ENCODE measurements at regions of chr11 and their contacts with region 1.

Region 1: GRCh38 chr11:122853971-122854446 is 15.7 kb downstream of the CRTAM start:
- DNase-seq: peak in 5 of 9 experiments; percentile 41 to 85 (median 65)
- ATAC-seq: no peak
- H3K4me3 ChIP-seq: no peak overlapping the region
- H3K4me3 Mint-ChIP-seq: no peak overlapping the region
- H3K27ac ChIP-seq: no peak overlapping the region
- H3K27ac Mint-ChIP-seq: peak overlapping the region; percentile 93
- H3K4me1 ChIP-seq: peaks cover 57% of the 10 kb centered on the region
- H3K4me1 Mint-ChIP-seq: peaks cover 61% of the 10 kb centered on the region
- H3K27me3 ChIP-seq: no peaks in the 10 kb centered on the region
- H3K27me3 Mint-ChIP-seq: no peaks in the 10 kb centered on the region
- CTCF ChIP-seq: peak; percentile 78

Region 2: GRCh38 chr11:122628810-122629555 is 225.0 kb before region 1 on chr11:
- CTCF ChIA-PET with region 1: interaction called, 14 read pairs
- POLR2A ChIA-PET with region 1: no interaction called
- intact Hi-C with region 1: loop called in 1 of 2 experiments (anchors 1 kb)
- DNase-seq: peak; percentile 46 to 81 (median 71)
- ATAC-seq: peak; percentile 93
- H3K4me3 ChIP-seq: no peak overlapping the region
- H3K4me3 Mint-ChIP-seq: no peak overlapping the region
- H3K27ac ChIP-seq: no peak overlapping the region
- H3K27ac Mint-ChIP-seq: no peak overlapping the region
- H3K4me1 ChIP-seq: no peaks in the 10 kb centered on the region
- H3K4me1 Mint-ChIP-seq: peaks cover 20% of the 10 kb centered on the region
- H3K27me3 ChIP-seq: no peaks in the 10 kb centered on the region
- H3K27me3 Mint-ChIP-seq: no peaks in the 10 kb centered on the region
- CTCF ChIP-seq: peak; percentile 75

Region 3: GRCh38 chr11:122727101-122727929 is 126.7 kb before region 1 on chr11:
- CTCF ChIA-PET with region 1: no interaction called
- POLR2A ChIA-PET with region 1: no interaction called
- intact Hi-C with region 1: no loop called
- DNase-seq: peak in 8 of 9 experiments; percentile 6 to 67 (median 39)
- ATAC-seq: peak; percentile 74
- H3K4me3 ChIP-seq: peak overlapping the region; percentile 3 to 28
- H3K4me3 Mint-ChIP-seq: peak overlapping the region; percentile 80
- H3K27ac ChIP-seq: peak overlapping the region; percentile 56 to 74
- H3K27ac Mint-ChIP-seq: peak overlapping the region; percentile 98
- H3K4me1 ChIP-seq: peaks cover 66% of the 10 kb centered on the region
- H3K4me1 Mint-ChIP-seq: peaks cover 80% of the 10 kb centered on the region
- H3K27me3 ChIP-seq: no peaks in the 10 kb centered on the region
- H3K27me3 Mint-ChIP-seq: no peaks in the 10 kb centered on the region
- CTCF ChIP-seq: no peak

Region 4: GRCh38 chr11:122772945-122773344 is 81.1 kb before region 1 on chr11:
- CTCF ChIA-PET with region 1: interaction called, 17 read pairs
- POLR2A ChIA-PET with region 1: no interaction called
- intact Hi-C with region 1: no loop called
- DNase-seq: no peak
- ATAC-seq: no peak
- H3K4me3 ChIP-seq: no peak overlapping the region
- H3K4me3 Mint-ChIP-seq: no peak overlapping the region
- H3K27ac ChIP-seq: no peak overlapping the region
- H3K27ac Mint-ChIP-seq: no peak overlapping the region
- H3K4me1 ChIP-seq: no peaks in the 10 kb centered on the region
- H3K4me1 Mint-ChIP-seq: peaks cover 30% of the 10 kb centered on the region
- H3K27me3 ChIP-seq: no peaks in the 10 kb centered on the region
- H3K27me3 Mint-ChIP-seq: no peaks in the 10 kb centered on the region
- CTCF ChIP-seq: no peak

Region 5: GRCh38 chr11:122808478-122808869 is 45.5 kb before region 1 on chr11:
- CTCF ChIA-PET with region 1: interaction called, 191 read pairs
- POLR2A ChIA-PET with region 1: interaction called, 6 read pairs
- intact Hi-C with region 1: no loop called
- DNase-seq: no peak
- ATAC-seq: no peak
- H3K4me3 ChIP-seq: no peak overlapping the region
- H3K4me3 Mint-ChIP-seq: no peak overlapping the region
- H3K27ac ChIP-seq: peak overlapping the region in 1 of 2 experiments; percentile 47
- H3K27ac Mint-ChIP-seq: peak overlapping the region; percentile 85
- H3K4me1 ChIP-seq: peaks cover 35% of the 10 kb centered on the region
- H3K4me1 Mint-ChIP-seq: peaks cover 61% of the 10 kb centered on the region
- H3K27me3 ChIP-seq: no peaks in the 10 kb centered on the region
- H3K27me3 Mint-ChIP-seq: no peaks in the 10 kb centered on the region
- CTCF ChIP-seq: no peak

Region 6: GRCh38 chr11:122843281-122844141 is 10.5 kb before region 1 on chr11:
- CTCF ChIA-PET with region 1: interaction called, 127 read pairs
- POLR2A ChIA-PET with region 1: interaction called, 69 read pairs
- intact Hi-C with region 1: loop called (anchors 1 kb)
- DNase-seq: peak; percentile 31 to 92 (median 61)
- ATAC-seq: peak; percentile 82
- H3K4me3 ChIP-seq: peak overlapping the region; percentile 14 to 38
- H3K4me3 Mint-ChIP-seq: peak overlapping the region; percentile 59
- H3K27ac ChIP-seq: peak overlapping the region; percentile 56 to 84
- H3K27ac Mint-ChIP-seq: peak overlapping the region; percentile 94
- H3K4me1 ChIP-seq: peaks cover 75% of the 10 kb centered on the region
- H3K4me1 Mint-ChIP-seq: peaks cover 86% of the 10 kb centered on the region
- H3K27me3 ChIP-seq: no peaks in the 10 kb centered on the region
- H3K27me3 Mint-ChIP-seq: no peaks in the 10 kb centered on the region
- CTCF ChIP-seq: no peak

Region 7: DNA sequence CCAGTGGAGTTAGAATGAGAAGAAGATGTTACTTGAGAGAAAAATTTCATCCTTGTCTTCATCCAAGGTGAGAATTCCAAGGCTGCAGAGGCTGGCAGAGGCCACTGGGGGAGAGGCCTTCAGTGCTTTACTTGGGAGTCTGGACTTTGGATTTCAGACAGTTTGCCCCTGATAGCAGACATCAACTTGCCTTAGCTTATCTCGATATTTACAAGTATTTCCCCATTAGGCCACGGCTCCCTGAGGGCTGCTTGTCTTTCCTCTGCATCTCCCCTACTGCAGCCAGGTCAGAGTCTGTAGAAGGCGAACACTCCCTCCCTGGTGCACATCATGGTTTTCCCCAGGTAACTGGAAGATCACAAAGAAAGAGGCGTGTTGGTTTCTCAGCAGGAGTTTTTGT is 157.5 kb after region 1 on chr11:
- CTCF ChIA-PET with region 1: no interaction called
- POLR2A ChIA-PET with region 1: no interaction called
- intact Hi-C with region 1: no loop called
- DNase-seq: no peak
- ATAC-seq: no peak
- H3K4me3 ChIP-seq: no peak overlapping the region
- H3K4me3 Mint-ChIP-seq: no peak overlapping the region
- H3K27ac ChIP-seq: no peak overlapping the region
- H3K27ac Mint-ChIP-seq: no peak overlapping the region
- H3K4me1 ChIP-seq: no peaks in the 10 kb centered on the region
- H3K4me1 Mint-ChIP-seq: no peaks in the 10 kb centered on the region
- H3K27me3 ChIP-seq: no peaks in the 10 kb centered on the region
- H3K27me3 Mint-ChIP-seq: peaks cover 2% of the 10 kb centered on the region
- CTCF ChIP-seq: no peak

Region 8: GRCh38 chr11:123062158-123062891 is 208.3 kb after region 1 on chr11:
- CTCF ChIA-PET with region 1: no interaction called
- POLR2A ChIA-PET with region 1: interaction called, 9 read pairs
- intact Hi-C with region 1: loop called (anchors 5 kb)
- DNase-seq: peak; percentile 98 to 100 (median 99)
- ATAC-seq: peak; percentile 81
- H3K4me3 ChIP-seq: peak overlapping the region; percentile 78 to 97
- H3K4me3 Mint-ChIP-seq: peak overlapping the region; percentile 97
- H3K27ac ChIP-seq: peak overlapping the region; percentile 87 to 98
- H3K27ac Mint-ChIP-seq: peak overlapping the region; percentile 97
- H3K4me1 ChIP-seq: peaks cover 49% of the 10 kb centered on the region
- H3K4me1 Mint-ChIP-seq: peaks cover 63% of the 10 kb centered on the region
- H3K27me3 ChIP-seq: no peaks in the 10 kb centered on the region
- H3K27me3 Mint-ChIP-seq: no peaks in the 10 kb centered on the region
- CTCF ChIP-seq: no peak

Measured in CD8-positive, alpha-beta T cell (primary cell).